ENCODE measurements at regions of chr6 and their contacts with region 1.

Region 1: GRCh38 chr6:57089687-57090460 is at the start of gene ZNF451:
- DNase-seq: peak; percentile 99
- total RNA-seq, gene ZNF451: 31.6 TPM

Region 2: DNA sequence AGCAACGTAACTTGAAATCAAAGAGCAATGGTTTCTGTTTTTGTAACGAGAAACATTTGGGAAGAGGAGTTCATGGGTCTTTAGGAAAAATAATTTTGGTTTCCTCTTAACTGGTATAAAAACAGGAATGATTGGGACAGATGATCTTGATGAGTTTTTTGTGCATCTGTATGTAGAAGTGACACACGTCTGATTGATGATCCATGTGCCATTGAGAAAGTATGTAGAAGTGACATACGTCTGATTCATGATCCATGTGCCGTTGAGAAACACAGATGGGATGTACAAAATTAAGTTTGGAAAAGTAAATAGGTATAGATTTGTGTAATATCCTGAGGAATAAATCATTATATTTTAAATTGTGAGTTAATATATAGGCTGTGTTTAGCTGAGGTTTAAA is 41.3 kb before region 1 on chr6:
- intact Hi-C with region 1: loop called (anchors 5 kb)
- DNase-seq: no peak

Region 3: GRCh38 chr6:57108691-57109090 is 18.8 kb after region 1 on chr6:
- intact Hi-C with region 1: no loop called
- DNase-seq: no peak